ENCODE measurements at regions of chr1 and their contacts with region 1.

Region 1: DNA sequence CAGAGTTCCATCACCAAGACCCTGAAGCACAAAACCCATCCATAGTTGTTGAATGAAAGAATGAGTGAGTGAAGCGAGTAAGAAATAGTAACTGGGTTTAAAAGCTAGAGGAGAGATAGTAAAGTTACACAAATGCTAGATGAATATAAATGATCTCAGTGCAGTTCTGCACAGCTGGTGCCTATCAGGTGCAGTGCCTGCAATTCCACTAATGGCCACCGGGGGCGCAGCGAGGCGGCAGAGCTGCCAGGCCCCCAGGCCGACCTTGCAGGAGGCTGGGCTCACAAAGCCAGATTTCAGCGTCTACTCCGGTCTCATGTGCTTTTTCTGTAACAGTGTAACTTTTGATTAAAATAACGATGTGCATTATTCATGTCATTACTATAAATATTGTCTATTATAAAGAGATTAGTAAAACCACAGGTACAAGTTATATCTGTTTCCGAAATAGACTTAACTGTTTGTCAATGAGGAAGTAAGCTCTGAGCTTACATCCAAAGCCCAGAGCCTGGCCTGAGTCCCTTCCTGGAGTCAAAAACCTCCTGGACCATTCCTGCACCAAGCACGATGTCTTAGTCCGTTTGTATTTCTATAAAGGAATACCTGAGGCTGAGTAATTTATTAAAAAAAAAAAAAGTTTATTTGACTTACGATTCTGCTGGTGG is 477.6 kb downstream of the NPHP4 start:
- DNase-seq: peak; percentile 73
- ATAC-seq: peak; percentile 89
- H3K4me3 ChIP-seq: no peak overlapping the region
- H3K27ac ChIP-seq: no peak overlapping the region
- H3K4me1 ChIP-seq: no peaks in the 10 kb centered on the region
- H3K27me3 ChIP-seq: peaks cover 44% of the 10 kb centered on the region
- CTCF ChIP-seq: peak; percentile 100

Region 2: DNA sequence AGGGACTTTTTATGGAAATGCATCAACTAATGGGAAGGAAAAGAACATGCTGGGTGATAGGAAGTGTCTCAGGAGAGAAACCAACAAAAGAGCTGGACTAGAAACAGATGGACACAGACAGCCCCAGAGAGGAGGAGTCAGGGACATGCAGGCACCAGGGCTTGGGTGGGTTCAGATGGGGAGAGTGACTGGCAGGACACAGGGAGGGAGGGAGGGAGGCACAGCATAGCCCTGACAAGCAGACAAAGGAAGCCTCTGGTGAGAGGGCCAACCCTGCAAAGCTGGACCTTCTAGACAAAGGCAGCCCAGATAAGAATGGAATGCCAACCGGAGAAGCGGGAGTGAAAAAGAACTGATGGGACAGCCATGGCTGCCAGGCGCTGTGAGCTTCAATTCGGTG is 291.4 kb before region 1 on chr1:
- CTCF ChIA-PET with region 1: no interaction called
- POLR2A ChIA-PET with region 1: no interaction called
- intact Hi-C with region 1: no loop called
- DNase-seq: no peak
- ATAC-seq: no peak
- H3K4me3 ChIP-seq: no peak overlapping the region
- H3K27ac ChIP-seq: no peak overlapping the region
- H3K4me1 ChIP-seq: no peaks in the 10 kb centered on the region
- H3K27me3 ChIP-seq: peaks cover 20% of the 10 kb centered on the region
- CTCF ChIP-seq: no peak

Region 3: GRCh38 chr1:5348732-5349465 is 165.8 kb before region 1 on chr1:
- CTCF ChIA-PET with region 1: no interaction called
- POLR2A ChIA-PET with region 1: no interaction called
- intact Hi-C with region 1: no loop called
- DNase-seq: no peak
- ATAC-seq: no peak
- H3K4me3 ChIP-seq: no peak overlapping the region
- H3K27ac ChIP-seq: no peak overlapping the region
- H3K4me1 ChIP-seq: no peaks in the 10 kb centered on the region
- H3K27me3 ChIP-seq: no peaks in the 10 kb centered on the region
- CTCF ChIP-seq: no peak

Region 4: GRCh38 chr1:5379176-5379759 is 135.4 kb before region 1 on chr1:
- CTCF ChIA-PET with region 1: no interaction called
- POLR2A ChIA-PET with region 1: no interaction called
- intact Hi-C with region 1: no loop called
- DNase-seq: no peak
- ATAC-seq: no peak
- H3K4me3 ChIP-seq: no peak overlapping the region
- H3K27ac ChIP-seq: no peak overlapping the region
- H3K4me1 ChIP-seq: no peaks in the 10 kb centered on the region
- H3K27me3 ChIP-seq: no peaks in the 10 kb centered on the region; the same call in 1 of the 2 replicates
- CTCF ChIP-seq: no peak

Region 5: GRCh38 chr1:5745776-5746610 is 231.3 kb after region 1 on chr1:
- CTCF ChIA-PET with region 1: no interaction called
- POLR2A ChIA-PET with region 1: no interaction called
- intact Hi-C with region 1: loop called (anchors 1 kb)
- DNase-seq: peak; percentile 85
- ATAC-seq: peak; percentile 95
- H3K4me3 ChIP-seq: no peak overlapping the region
- H3K27ac ChIP-seq: no peak overlapping the region
- H3K4me1 ChIP-seq: no peaks in the 10 kb centered on the region
- H3K27me3 ChIP-seq: peaks cover 92% of the 10 kb centered on the region
- CTCF ChIP-seq: peak; percentile 99

Region 6: DNA sequence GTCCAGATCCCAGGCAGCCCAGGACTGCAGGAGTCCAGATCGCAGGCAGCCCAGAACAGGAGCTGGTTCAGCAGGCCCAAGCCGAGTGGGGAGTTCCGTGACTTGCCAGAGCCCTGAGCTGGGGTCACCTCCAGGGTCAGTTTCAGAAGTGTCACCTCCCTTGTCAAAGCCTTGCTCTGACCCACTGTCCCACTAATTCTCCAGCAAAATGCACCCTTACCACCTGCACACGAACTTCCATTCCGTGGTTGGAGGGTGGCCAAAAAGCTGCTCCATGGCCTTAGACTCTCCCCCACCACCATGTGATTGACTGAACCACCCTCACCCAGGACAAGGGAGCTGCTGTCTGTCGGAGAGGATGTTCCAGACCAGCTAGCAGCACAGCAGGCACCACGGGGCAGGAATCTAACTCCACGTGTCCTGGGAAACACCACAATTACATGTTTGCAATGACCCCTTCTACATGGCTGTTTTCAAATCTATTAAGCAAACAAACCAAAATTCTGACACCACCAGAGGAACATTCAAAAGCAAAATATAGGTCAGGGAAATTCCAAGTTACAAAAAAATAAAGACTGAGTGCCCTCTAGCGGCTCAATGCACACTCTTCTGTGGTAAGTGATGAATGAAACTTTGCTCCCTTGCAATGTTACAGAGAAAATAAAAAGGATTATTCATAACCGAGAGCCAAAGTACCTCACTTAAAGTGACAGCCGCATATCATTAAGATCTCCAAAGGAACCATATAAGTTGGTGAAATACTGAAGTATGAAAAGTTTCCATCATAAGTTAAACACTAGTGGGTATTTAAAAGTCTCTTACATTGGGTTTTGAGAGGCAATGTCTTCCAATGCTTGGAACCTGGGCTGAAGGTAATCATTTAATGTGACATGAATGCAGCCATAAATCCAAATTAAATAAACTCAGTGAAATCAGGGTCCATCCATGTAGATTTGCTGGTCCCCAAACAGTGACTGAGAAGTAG is 401.2 kb after region 1 on chr1:
- CTCF ChIA-PET with region 1: no interaction called
- POLR2A ChIA-PET with region 1: no interaction called
- intact Hi-C with region 1: loop called (anchors 1 kb)
- DNase-seq: peak; percentile 69
- ATAC-seq: peak; percentile 87
- H3K4me3 ChIP-seq: no peak overlapping the region
- H3K27ac ChIP-seq: no peak overlapping the region
- H3K4me1 ChIP-seq: no peaks in the 10 kb centered on the region
- H3K27me3 ChIP-seq: no peaks in the 10 kb centered on the region
- CTCF ChIP-seq: peak; percentile 95